ENCODE measurements at regions of chr19 and their contacts with region 1.

Region 1: DNA sequence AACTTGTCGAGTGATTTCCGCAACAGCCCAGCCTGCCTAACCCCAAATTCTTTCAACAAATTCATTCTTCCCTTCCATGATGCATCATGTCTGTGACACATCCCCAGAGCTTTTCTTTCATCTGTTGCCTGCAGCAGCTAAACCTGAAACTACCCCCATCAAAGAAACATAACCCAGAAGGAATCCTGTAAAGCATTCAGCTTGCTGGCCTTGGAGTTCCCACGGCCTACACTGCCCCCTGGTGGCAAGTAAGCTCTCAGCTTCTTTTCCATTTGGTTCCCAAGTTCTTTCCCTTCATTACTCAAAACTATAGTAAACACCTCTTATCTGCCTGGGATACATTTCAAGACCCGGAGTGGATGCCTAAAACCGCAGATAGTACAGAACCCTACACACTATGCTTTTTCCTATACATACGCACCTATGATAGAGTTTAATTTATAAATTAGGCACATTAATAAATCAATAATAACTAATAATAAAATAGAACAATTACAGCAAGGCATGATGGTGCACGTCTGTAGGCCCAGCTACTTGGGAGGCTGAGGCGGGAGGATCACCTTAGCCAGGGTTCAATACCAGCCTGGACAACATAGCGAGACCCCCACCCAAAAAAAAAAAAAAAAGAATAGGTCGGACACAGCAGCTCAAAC is 7.4 kb downstream of the ETHE1 start:
- DNase-seq: peak; percentile 62 to 86 (median 82)
- ATAC-seq: peak; percentile 60 to 98 (median 92)
- H3K4me3 ChIP-seq: no peak overlapping the region
- H3K27ac ChIP-seq: no peak overlapping the region
- H3K4me1 ChIP-seq: peaks cover 0 to 2% (median under 1%) of the 10 kb centered on the region in 3 donors
- H3K27me3 ChIP-seq: no peaks in the 10 kb centered on the region
- CTCF ChIP-seq: peak; percentile 83 to 92 (median 86)

Region 2: GRCh38 chr19:43446746-43447489 is 72.6 kb before region 1 on chr19:
- intact Hi-C with region 1: loop called (anchors 5 kb)
- DNase-seq: peak; percentile 55 to 90 (median 80)
- ATAC-seq: peak; percentile 90 to 98 (median 95)
- H3K4me3 ChIP-seq: no peak overlapping the region
- H3K27ac ChIP-seq: no peak overlapping the region
- H3K4me1 ChIP-seq: no peaks in the 10 kb centered on the region
- H3K27me3 ChIP-seq: no peaks in the 10 kb centered on the region
- CTCF ChIP-seq: peak; percentile 87 to 96 (median 92)

Region 3: DNA sequence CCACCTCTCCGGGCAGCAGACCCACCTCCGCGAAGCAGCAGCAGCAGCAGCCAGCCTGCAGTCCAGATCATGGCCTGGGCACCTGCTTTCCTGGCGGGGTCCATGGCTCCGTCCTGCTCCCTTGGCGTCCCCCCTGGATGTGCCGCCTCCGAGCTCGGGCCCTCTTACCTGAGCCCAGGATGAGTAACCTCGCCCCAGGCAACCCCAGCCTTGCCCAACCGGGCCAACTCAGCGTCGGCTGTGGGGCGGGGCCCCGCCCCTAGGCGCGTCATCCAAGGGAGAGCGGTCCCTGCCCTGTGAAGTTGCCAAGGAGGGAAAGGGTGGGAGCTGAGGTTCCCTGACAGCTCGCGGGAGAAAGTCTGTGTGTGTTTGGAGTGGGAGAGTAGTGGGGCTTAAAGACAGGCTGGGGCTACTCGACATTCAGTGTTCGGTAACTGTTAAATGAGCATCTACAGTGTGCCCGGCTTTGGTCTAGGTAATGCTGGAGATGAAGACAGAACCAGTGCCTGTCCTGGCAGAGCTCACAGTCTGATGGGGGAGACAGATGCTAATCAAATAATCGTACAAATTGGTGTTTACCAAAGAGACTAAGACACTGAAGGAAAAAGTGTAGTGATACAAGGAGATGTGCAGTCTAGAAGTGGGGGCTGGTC is 54.0 kb before region 1 on chr19 and contains the start of gene LYPD3:
- intact Hi-C with region 1: no loop called
- DNase-seq: peak in 3 of 6 donors; percentile 22 to 72 (median 59)
- ATAC-seq: no peak
- H3K4me3 ChIP-seq: peak within 1 kb of the TSS in 1 of 4 donors; percentile 69
- H3K27ac ChIP-seq: no peak within 1 kb of the TSS
- H3K4me1 ChIP-seq: peaks cover 0 to 3% (median 0%) of the 10 kb centered on the region in 3 donors
- H3K27me3 ChIP-seq: no peaks in the 10 kb centered on the region
- CTCF ChIP-seq: no peak
- total RNA-seq, gene LYPD3: 0.20 to 0.53 (median 0.31) TPM

Region 4: DNA sequence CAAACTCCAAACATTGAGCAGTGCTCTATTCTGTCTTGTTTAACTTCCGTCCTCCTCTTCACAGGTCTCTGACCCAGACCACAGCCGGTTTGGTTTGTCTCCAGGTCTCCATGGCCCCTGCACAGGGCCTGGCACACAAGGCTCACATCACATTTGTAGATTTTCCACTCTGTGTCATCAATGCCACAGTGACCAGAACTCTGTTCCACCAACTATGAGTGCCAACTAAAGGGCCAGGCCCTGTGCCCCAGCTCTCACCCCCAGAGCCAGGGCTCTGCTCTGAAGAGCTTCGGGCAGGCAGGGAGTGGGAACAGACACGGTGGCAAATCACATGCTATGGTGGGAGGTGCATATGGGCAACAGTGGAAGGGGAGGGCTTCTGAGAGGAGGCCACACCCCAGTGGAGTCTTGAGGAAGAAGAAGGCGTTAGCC is 219.2 kb after region 1 on chr19:
- intact Hi-C with region 1: no loop called
- DNase-seq: no peak
- ATAC-seq: peak in 3 of 4 donors; percentile 64 to 76 (median 64)
- H3K4me3 ChIP-seq: no peak overlapping the region
- H3K27ac ChIP-seq: no peak overlapping the region
- H3K4me1 ChIP-seq: no peaks in the 10 kb centered on the region
- H3K27me3 ChIP-seq: no peaks in the 10 kb centered on the region
- CTCF ChIP-seq: no peak